Left ventricle myocardium superior (tissue), 1 donor: ENCODE measurements at regions of chr13 and their contacts with region 1.

Region 1: DNA sequence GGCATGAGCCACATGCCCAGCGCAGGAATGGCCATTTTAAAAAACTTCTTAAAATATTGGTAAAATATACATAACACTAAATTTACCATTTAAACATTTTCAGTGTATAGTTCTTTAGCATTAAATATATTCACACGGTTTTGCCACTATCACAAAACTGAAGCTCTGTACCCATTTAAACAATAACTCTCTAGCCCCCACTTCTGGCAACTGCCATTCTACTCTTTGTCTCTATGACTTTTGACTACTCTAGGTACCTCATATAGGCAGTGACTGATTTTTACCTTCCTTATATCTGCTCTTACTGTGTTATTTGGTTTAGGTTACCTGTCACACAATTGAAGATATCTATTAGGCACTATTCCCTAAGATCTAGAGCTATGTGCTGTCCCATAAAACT is 2.3 kb upstream of the KBTBD7 start:
- DNase-seq: no peak
- ATAC-seq: no peak

Region 2: DNA sequence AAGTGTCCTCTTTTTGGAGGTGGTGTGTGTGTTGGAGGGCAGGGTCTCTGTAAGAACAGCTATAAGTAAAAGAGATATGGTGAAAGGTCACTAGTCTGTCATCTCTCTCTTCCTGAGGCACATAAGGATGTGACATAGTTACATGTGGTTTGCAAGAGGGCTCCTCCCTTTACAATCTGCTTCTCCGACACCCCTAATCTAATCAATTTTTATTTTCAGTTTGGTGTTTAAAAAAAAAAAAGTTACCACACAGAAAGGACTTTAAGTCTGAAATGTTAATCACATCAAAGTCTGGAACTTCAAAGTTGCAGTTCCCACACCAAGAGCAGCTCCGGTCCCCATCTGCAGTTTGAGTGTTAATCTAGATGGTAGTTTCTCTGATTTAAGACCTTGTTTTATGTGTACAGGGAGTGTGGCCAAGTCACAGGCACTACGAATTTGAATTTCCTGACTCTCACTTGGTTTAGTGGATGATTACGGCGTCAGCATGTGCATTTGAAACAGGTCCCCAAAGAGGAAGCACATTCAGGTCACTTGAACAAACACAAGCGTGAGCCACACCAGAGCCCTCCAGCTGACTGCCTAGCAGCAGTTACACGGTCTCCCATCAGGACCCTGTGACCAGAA is 583.3 kb before region 1 on chr13:
- intact Hi-C with region 1: no loop called
- DNase-seq: no peak
- ATAC-seq: peak; percentile 67

Region 3: GRCh38 chr13:41132512-41133152 is 64.0 kb before region 1 on chr13 and contains the start of gene KBTBD6:
- intact Hi-C with region 1: loop called (anchors 5 kb)
- DNase-seq: peak; percentile 97
- ATAC-seq: peak; percentile 99
- total RNA-seq, gene KBTBD6: 10.7 TPM